Dendritic cell treated with granulocyte-macrophage colony-stimulating factor and Interleukin-4, amounts not matched to agents 40 ng/mL and 50 ng/mL, for 4 days (primary cell): ENCODE measurements at regions of chr1 and their contacts with region 1.

Region 1: GRCh38 chr1:33007190-33008050 is 29.3 kb downstream of the AK2 start:
- H3K4me3 Mint-ChIP-seq: peak overlapping the region; percentile 24
- H3K27ac Mint-ChIP-seq: peak overlapping the region; percentile 81
- H3K4me1 Mint-ChIP-seq: peaks cover 87% of the 10 kb centered on the region
- H3K27me3 Mint-ChIP-seq: no peaks in the 10 kb centered on the region

Region 2: DNA sequence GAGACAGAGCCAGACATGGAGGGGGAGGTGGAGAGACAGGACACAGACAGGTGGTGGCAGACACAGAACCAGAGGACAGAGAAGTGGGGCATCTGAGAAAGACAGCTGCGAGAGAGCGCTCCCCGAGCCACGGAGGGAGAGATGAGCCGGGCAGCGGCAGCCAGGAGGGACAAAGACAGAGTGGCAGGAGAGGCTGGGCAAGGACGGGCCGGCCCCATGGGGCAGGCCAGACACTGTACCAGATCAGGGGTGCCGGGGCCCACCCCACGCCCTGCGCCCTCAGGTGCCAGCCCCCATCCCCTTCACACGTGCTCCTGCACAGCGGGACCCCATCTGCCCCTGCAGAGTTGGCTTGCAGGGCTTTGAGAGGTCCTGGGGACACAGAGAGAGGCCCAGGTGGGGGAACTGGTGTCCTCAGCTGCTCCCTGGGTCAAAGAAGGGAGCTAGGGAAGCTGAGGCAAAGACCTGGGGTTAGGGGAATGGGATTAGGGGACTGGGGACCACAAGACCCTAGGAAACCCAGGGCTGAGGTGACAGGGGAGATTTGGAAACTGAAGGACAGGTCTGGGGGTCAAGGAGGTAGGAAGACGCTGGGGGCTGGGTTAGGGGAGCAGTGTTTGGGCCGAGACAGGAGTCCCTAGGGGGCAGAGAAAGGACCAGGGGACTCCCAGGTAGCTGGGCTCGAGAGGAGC is 137.4 kb before region 1 on chr1:
- intact Hi-C with region 1: no loop called
- H3K4me3 Mint-ChIP-seq: peak overlapping the region; percentile 57
- H3K27ac Mint-ChIP-seq: peak overlapping the region; percentile 0
- H3K4me1 Mint-ChIP-seq: peaks cover 10% of the 10 kb centered on the region
- H3K27me3 Mint-ChIP-seq: peaks cover 55% of the 10 kb centered on the region

Region 3: DNA sequence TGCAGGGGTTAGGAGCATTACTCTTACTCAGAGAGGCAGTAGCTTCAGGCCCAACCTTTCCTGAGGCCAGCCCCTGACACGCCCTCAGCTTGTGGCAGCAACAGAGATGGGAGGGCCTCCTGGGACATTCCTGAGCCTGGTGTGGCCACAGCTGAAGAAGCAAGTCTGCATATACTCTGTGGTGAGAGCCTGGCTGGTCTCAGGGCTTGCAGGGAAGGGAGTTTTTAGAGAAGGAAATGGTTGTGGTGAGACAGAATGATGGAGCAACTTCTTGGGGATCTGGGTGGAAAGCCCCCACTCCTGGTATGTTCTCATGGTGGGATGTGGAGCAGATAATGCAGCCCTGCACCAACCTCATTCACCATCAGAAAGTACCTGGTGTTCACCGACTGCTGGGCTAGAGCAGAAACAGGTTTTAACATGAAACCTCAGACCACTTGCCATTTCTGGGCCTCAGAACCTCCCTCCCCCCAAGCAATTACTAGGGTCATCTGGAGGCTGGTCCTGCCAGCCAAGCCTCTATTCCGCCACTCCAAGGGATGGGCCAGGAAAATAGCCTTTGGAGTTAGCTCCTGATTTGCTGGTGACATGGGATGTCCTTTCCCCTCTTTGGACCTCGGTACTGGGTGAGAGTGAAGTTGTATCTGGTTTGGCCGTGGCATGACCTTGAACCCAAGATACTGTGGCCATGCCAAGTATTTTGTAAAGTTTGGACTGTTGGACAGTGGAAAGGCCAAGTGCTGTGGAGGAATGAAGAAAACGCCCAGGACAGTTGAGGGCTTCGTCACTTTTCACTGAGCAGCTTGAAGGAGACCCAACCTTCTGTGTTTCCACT is 14.7 kb before region 1 on chr1:
- intact Hi-C with region 1: loop called (anchors 2 kb)
- H3K4me3 Mint-ChIP-seq: peak overlapping the region; percentile 55
- H3K27ac Mint-ChIP-seq: peak overlapping the region; percentile 99
- H3K4me1 Mint-ChIP-seq: peaks cover 95% of the 10 kb centered on the region
- H3K27me3 Mint-ChIP-seq: no peaks in the 10 kb centered on the region

Region 4: GRCh38 chr1:33055210-33056008 is 48.0 kb after region 1 on chr1:
- intact Hi-C with region 1: loop called (anchors 10 kb)
- H3K4me3 Mint-ChIP-seq: no peak overlapping the region
- H3K27ac Mint-ChIP-seq: peak overlapping the region; percentile 7
- H3K4me1 Mint-ChIP-seq: peaks cover 31% of the 10 kb centered on the region
- H3K27me3 Mint-ChIP-seq: no peaks in the 10 kb centered on the region